ENCODE measurements at regions of chr10 and their contacts with region 1.

Region 1: DNA sequence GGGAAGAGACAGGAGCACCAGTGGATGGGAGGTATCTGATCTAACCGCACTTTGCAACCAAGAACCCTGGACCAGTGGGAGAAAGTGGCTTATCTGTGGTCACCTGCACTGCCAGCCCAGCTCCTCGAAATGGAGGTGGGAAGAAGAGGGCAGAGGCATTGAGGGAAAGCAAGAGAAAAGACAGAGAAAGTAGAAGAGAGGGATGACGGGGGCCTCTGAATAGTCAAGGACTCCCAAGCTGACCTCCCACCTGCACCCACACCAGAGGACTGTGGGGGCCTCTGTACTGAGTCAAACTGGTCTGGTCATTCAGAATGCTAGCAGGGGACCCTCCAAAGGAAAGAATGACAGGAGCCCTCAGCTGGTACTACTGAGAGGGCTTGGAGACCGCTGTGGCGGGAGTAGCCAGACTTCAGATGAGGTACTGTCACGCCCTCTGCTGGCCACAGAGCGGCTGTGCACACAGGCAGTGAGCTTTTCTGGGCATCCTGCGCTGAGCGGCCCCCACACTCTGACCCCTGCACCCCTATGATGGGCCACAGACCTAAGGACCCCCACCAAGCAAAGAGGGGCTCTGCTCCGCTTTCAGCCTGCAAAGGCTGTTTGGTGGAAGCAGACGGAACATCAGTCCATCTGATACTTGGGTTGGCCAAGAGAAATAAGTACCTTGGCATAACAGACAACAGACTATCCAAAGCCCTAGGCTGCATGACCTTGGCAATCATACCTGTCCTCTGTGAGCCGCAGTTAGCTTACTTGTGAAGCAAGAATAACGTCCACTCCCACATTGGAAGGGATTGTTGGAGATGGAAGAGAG is 112.9 kb downstream of the COL13A1 start:
- DNase-seq: peak; percentile 45
- ATAC-seq: peak; percentile 93
- H3K4me3 ChIP-seq: no peak overlapping the region
- H3K27ac ChIP-seq: no peak overlapping the region
- H3K4me1 ChIP-seq: no peaks in the 10 kb centered on the region
- H3K27me3 ChIP-seq: peaks cover 7 to 33% of the 10 kb centered on the region in 2 experiments; a peak in 4 of 5 replicates
- CTCF ChIP-seq: peak; percentile 92
- EP300 ChIP-seq: no peak
- POLR2A ChIP-seq: no peak
- RAD21 ChIP-seq: peak; percentile 89

Region 2: DNA sequence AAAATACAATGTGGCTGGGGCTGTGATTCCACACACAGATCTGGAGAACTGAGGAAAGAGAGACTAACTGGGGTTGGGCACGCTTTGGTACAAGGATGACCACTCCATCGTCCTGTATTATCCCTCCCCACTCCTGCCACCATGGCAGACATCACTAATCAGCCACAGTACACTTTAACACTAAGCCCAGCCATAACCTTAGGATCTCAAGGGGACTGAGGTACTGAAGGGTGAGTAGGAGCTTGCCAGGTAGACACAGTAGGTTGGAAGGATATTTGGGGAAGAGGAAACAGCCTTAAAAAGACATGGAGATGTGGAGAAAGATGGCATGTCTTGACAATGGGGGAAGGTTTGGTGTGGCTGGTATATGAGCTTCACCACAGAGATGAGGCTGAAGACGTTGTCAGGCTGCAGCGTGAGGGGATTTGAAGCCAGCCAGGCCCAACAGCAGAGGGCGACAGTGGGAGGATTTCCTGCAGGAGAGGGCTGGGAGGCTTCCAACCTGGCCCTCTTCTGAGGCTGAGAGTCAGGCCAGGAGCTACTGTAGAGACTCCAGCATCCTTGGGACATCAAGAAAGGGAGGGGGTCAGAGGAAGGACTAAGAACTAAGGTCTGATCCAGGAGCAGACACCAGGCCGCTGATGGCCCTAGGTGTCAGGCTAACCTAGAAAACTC is 171.5 kb before region 1 on chr10:
- CTCF ChIA-PET with region 1: no interaction called
- POLR2A ChIA-PET with region 1: no interaction called
- in situ Hi-C with region 1: no loop called
- intact Hi-C with region 1: loop called (anchors 10 kb)
- DNase-seq: no peak
- ATAC-seq: peak; percentile 73
- H3K4me3 ChIP-seq: no peak overlapping the region
- H3K27ac ChIP-seq: no peak overlapping the region
- H3K4me1 ChIP-seq: no peaks in the 10 kb centered on the region
- H3K27me3 ChIP-seq: peaks cover 0 to 19% of the 10 kb centered on the region in 2 experiments; a peak in 1 of 5 replicates
- CTCF ChIP-seq: peak; percentile 57
- EP300 ChIP-seq: no peak
- POLR2A ChIP-seq: no peak
- RAD21 ChIP-seq: no peak; the same call in 1 of the 2 replicates

Region 3: DNA sequence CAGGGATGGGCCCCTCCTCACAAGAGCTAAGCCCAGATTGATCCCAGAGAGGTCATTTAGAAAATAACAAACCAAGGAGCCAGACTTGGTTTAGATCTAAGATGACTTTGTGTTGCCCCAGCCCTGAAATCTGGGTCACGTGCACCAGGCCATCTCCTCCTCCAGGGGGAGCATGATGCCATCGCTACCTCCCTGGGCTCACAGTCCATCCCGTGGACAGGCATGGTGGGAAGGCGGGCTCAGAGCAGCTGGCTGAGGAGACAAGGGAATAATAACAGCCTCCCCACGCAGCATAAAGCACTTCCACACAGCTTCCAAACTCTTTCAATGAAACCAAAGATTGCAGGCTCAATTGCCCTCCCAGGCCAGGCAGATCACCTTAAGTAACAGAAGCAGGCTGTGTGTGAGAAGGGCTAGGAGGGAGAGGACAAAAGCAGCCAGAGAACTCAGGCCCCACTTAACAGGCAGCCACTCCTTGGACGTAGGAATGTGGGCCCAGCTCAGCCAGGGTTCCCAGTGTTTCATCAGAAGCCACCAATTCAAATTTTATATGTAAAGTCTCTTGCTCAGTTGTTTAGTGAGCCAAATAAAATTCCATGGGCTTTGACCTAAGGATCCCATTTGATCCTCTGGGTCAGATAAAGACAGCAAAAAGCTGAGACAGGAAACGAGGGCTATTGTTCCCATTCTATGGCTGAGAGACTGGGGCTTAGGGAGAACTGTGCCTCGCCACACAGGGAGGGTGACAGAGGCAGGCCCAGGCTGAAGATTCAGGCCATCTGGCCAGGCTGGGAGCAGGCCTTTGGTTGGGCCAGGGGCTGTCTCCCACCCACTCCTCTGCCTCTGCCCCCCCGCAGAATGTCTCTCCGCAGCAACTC is 12.7 kb before region 1 on chr10:
- CTCF ChIA-PET with region 1: interaction called, 14 read pairs
- POLR2A ChIA-PET with region 1: no interaction called
- in situ Hi-C with region 1: no loop called
- intact Hi-C with region 1: loop called (anchors 1 kb)
- DNase-seq: peak; percentile 50
- ATAC-seq: peak; percentile 97
- H3K4me3 ChIP-seq: no peak overlapping the region
- H3K27ac ChIP-seq: no peak overlapping the region
- H3K4me1 ChIP-seq: no peaks in the 10 kb centered on the region
- H3K27me3 ChIP-seq: peaks cover 0 to 5% of the 10 kb centered on the region in 2 experiments; a peak in 2 of 5 replicates
- CTCF ChIP-seq: peak; percentile 76
- EP300 ChIP-seq: no peak
- POLR2A ChIP-seq: no peak
- RAD21 ChIP-seq: 0 out of 2 replicates have a peak, but pooled peaks have one; percentile 31